ENCODE measurements at regions of chr11 and their contacts with region 1.

Region 1: GRCh38 chr11:121032546-121032945 is 8.6 kb downstream of the TBCEL start:
- DNase-seq: no peak
- H3K4me3 Mint-ChIP-seq: no peak overlapping the region
- H3K27ac Mint-ChIP-seq: no peak overlapping the region
- H3K4me1 Mint-ChIP-seq: peaks cover 39% of the 10 kb centered on the region
- H3K27me3 Mint-ChIP-seq: peaks cover 2% of the 10 kb centered on the region

Region 2: DNA sequence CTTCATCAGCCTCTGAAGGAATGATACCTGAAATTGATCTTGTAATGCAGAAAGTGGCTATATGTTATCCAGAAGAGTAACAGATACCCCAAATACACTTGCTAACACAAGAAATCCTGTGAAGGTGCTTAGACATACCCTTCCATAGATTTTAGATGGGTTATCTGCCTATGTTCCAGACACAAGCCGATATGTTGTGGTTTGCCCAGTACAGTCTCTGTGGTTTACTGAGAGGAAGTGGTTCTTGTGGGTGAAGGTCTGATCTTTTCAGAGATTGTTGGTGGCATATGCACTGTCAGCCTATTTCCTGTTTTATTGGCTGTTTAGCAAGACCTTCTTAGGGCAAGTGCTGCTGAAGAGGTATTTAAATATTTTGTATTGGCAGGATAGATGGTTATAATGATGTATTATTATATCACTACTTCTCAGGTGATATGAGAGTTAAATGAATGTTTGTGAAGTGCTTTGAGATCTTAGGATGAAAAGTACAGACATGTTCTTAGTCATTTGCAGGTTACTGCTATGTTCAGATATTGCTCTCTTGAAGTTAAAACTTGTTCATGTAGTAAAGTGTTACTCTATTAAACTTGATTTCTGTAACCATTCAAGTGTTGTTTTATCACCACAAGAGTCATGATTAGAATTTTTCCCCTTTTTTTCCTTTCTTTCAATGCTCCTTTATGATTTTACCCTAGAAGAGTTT is 688.1 kb before region 1 on chr11:
- intact Hi-C with region 1: loop called (anchors 10 kb)
- DNase-seq: peak; percentile 71
- H3K4me3 Mint-ChIP-seq: peak overlapping the region; percentile 74
- H3K27ac Mint-ChIP-seq: peak overlapping the region; percentile 81
- H3K4me1 Mint-ChIP-seq: peaks cover 51% of the 10 kb centered on the region
- H3K27me3 Mint-ChIP-seq: peaks cover 60% of the 10 kb centered on the region

Region 3: GRCh38 chr11:121112498-121113455 is 80.2 kb after region 1 on chr11:
- intact Hi-C with region 1: loop called (anchors 5 kb)
- DNase-seq: peak; percentile 14
- H3K4me3 Mint-ChIP-seq: no peak overlapping the region
- H3K27ac Mint-ChIP-seq: no peak overlapping the region
- H3K4me1 Mint-ChIP-seq: no peaks in the 10 kb centered on the region
- H3K27me3 Mint-ChIP-seq: peaks cover 20% of the 10 kb centered on the region

Region 4: GRCh38 chr11:121141066-121141465 is 108.5 kb after region 1 on chr11:
- intact Hi-C with region 1: no loop called
- DNase-seq: no peak
- H3K4me3 Mint-ChIP-seq: no peak overlapping the region
- H3K27ac Mint-ChIP-seq: no peak overlapping the region
- H3K4me1 Mint-ChIP-seq: no peaks in the 10 kb centered on the region
- H3K27me3 Mint-ChIP-seq: peaks cover 3% of the 10 kb centered on the region

Region 5: GRCh38 chr11:121194731-121195596 is 162.4 kb after region 1 on chr11:
- intact Hi-C with region 1: loop called (anchors 10 kb)
- DNase-seq: peak; percentile 34
- H3K4me3 Mint-ChIP-seq: no peak overlapping the region
- H3K27ac Mint-ChIP-seq: no peak overlapping the region
- H3K4me1 Mint-ChIP-seq: peaks cover 7% of the 10 kb centered on the region
- H3K27me3 Mint-ChIP-seq: peaks cover 16% of the 10 kb centered on the region

Measured in activated T-helper 1 cell treated with anti-CD3 and anti-CD28 coated beads, Interleukin-12 subunit alpha, Interleukin-12 subunit beta, Interleukin-2, Interleukin-4 antibody, amounts not matched to agents 30 ng/mL and 10 ng/mL and 1 ng/mL, durations not matched to agents 14 hours and 24 hours and 36 hours (primary cell).